ENCODE measurements at regions of chr18 and their contacts with region 1.

Region 1: GRCh38 chr18:60060578-60060977 is 160.8 kb downstream of the PMAIP1 start:
- DNase-seq: no peak
- H3K4me3 ChIP-seq: no peak overlapping the region
- H3K27ac ChIP-seq: peak overlapping the region in 3 of 4 donors; percentile 33 to 43 (median 37)
- H3K4me1 ChIP-seq: peaks cover 0 to 22% (median 14%) of the 10 kb centered on the region in 4 donors
- H3K27me3 ChIP-seq: no peaks in the 10 kb centered on the region
- CTCF ChIP-seq: no peak
- EP300 ChIP-seq: no peak
- POLR2A ChIP-seq: no peak

Region 2: DNA sequence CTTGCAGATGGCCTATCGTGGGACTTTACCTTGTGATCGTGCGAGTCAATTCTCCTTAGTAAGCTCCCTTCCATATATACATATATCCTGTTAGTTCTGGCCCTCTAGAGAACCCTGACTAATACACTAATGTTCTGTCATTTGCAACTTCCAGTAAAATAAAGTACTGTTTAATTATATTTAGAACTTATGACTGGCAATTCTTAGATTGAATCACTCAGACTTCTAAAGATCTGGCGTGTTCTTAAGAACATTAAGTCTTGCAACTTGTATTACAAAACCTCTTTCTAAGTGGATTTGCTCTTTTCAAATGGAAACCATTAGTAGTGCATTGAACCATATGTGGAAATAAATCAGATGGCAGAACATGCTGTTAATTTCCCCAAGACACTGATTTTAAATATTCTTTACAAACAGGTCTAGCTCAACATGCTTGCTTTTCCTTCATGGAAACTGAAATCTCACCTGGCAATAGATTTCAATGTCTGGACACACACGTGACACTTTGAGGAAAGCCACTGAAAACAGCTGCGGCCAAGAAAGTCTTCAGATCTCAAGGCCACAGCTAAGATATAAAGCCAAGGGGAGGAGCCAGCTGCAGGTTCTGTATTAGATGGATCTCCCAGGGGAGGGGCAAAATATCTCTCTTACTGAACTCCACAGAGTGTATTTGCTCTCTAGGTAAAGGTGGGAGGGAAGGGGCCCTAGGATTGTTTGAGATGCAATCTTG is 110.2 kb before region 1 on chr18:
- intact Hi-C with region 1: no loop called
- DNase-seq: no peak
- H3K4me3 ChIP-seq: no peak overlapping the region
- H3K27ac ChIP-seq: no peak overlapping the region
- H3K4me1 ChIP-seq: peaks cover 0 to 7% (median 2%) of the 10 kb centered on the region in 4 donors
- H3K27me3 ChIP-seq: no peaks in the 10 kb centered on the region
- CTCF ChIP-seq: no peak
- EP300 ChIP-seq: no peak
- POLR2A ChIP-seq: no peak

Region 3: DNA sequence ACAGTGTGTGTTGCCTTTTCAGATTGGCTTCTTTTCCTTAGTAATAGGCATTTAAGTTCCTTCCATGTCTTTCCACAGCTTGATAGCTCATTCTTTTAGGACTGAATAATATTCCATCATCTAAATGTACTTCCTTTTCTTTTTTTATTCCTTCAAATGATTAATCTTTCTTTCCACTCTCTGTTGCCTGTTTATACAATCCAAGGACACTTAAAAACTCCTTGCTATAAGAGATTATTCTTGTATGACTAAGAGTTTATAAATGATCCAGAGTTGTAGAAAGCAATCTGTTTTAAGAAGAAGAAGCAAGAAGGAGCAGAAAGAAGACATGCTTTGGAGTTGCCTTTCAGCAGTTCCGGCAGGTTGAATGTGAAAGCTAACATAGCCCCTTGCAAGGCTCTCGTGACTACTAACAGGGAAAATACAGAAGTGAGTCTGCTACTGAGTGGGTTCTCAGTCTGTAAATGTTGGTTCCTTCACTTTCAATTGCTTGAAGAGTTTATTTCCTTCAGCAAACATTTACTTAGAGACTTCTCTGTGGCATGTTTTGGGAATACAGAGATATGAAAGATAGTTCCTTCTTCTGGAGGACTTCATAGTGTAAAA is 37.8 kb before region 1 on chr18:
- intact Hi-C with region 1: loop called (anchors 2 kb)
- DNase-seq: no peak
- H3K4me3 ChIP-seq: no peak overlapping the region
- H3K27ac ChIP-seq: peak overlapping the region; percentile 49 to 73 (median 64)
- H3K4me1 ChIP-seq: peaks cover 0 to 47% (median 34%) of the 10 kb centered on the region in 4 donors
- H3K27me3 ChIP-seq: no peaks in the 10 kb centered on the region
- CTCF ChIP-seq: no peak
- EP300 ChIP-seq: no peak
- POLR2A ChIP-seq: no peak